IMR-90 (cell line): ENCODE measurements at regions of chr5 and their contacts with region 1.

Region 1: GRCh38 chr5:80686757-80687156 is 32.0 kb upstream of the DHFR start:
- DNase-seq: peak; percentile 36
- ATAC-seq: peak; percentile 44; the same call in 1 of the 2 replicates
- H3K4me3 ChIP-seq: no peak overlapping the region
- H3K27ac ChIP-seq: no peak overlapping the region
- H3K4me1 ChIP-seq: peaks cover 2% of the 10 kb centered on the region; the same call in 1 of the 2 replicates
- H3K27me3 ChIP-seq: no peaks in the 10 kb centered on the region
- CTCF ChIP-seq: peak; percentile 58
- POLR2A ChIP-seq: no peak
- RAD21 ChIP-seq: peak; percentile 60

Region 2: DNA sequence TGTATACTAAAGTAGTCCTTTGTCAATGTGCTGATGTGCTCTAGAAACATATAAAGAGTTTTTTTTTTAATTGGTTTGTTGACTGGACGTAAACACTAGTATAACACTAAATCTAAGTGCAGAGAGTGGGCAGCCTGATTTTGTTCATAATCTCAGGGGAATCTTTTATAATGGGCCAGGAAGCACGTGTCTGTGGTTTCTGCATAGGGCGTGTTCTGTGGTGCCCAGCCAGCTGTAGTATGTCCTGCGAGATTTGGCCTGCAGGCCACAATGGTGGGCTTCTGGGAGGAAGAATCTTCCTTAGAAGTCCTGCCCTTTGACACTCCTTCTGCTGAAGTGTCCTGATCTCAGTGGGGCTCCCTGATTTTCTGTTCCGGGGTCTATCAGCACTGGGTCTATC is 17.0 kb after region 1 on chr5:
- CTCF ChIA-PET with region 1: no interaction called
- POLR2A ChIA-PET with region 1: no interaction called
- dilution Hi-C with region 1: no loop called
- in situ Hi-C with region 1: no loop called
- intact Hi-C with region 1: no loop called
- DNase-seq: no peak
- ATAC-seq: no peak
- H3K4me3 ChIP-seq: no peak overlapping the region
- H3K27ac ChIP-seq: no peak overlapping the region
- H3K4me1 ChIP-seq: peaks cover 5% of the 10 kb centered on the region
- H3K27me3 ChIP-seq: no peaks in the 10 kb centered on the region
- CTCF ChIP-seq: no peak
- POLR2A ChIP-seq: no peak
- RAD21 ChIP-seq: no peak

Region 3: DNA sequence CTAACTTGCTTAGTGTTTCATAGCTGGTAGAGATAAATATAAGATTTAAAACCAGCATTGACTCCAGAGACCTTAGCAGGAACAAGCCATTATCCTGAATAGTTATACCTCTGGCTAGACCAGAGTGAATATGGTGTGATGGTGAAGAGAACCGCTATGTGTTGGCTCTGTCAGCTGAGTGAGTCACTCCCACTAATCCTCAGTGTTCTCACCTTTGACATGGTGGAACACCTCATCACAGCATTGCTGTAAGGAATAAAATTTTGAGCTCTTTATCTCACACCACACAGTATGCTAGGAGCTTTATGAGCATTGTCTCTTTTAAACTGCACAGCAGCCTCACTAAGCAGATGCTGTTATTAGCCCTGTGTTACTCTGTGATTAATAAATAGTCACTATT is 58.7 kb after region 1 on chr5:
- CTCF ChIA-PET with region 1: no interaction called
- POLR2A ChIA-PET with region 1: no interaction called
- dilution Hi-C with region 1: no loop called
- in situ Hi-C with region 1: no loop called
- intact Hi-C with region 1: no loop called
- DNase-seq: peak; percentile 67
- ATAC-seq: no peak; the same call in 1 of the 2 replicates
- H3K4me3 ChIP-seq: no peak overlapping the region
- H3K27ac ChIP-seq: no peak overlapping the region
- H3K4me1 ChIP-seq: no peaks in the 10 kb centered on the region
- H3K27me3 ChIP-seq: no peaks in the 10 kb centered on the region
- CTCF ChIP-seq: no peak
- POLR2A ChIP-seq: no peak
- RAD21 ChIP-seq: no peak

Region 4: DNA sequence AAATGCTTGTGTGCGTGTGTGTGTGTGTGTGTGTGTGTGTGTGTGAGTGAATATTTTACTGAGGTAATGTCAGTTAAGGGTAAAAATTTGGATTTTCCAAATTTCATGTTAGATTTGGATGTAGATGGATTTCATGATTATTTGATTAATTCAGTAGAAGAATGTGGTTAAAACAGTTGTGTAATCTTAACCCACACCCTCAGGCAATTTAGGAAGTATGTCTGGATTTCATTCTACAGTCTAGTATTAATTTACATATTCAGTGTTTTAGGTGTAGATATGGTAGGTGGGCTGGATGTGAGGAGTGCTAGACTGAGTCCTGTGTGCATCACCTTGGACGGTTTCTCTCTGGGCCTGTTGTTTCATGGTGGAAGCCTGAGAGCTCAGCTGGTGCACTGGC is 447.3 kb after region 1 on chr5:
- CTCF ChIA-PET with region 1: no interaction called
- POLR2A ChIA-PET with region 1: no interaction called
- dilution Hi-C with region 1: no loop called
- in situ Hi-C with region 1: no loop called
- intact Hi-C with region 1: no loop called
- DNase-seq: no peak
- ATAC-seq: no peak
- H3K4me3 ChIP-seq: no peak overlapping the region
- H3K27ac ChIP-seq: no peak overlapping the region
- H3K4me1 ChIP-seq: no peaks in the 10 kb centered on the region
- H3K27me3 ChIP-seq: no peaks in the 10 kb centered on the region
- CTCF ChIP-seq: no peak
- POLR2A ChIP-seq: no peak
- RAD21 ChIP-seq: no peak

Region 5: GRCh38 chr5:81194633-81195333 is 508.0 kb after region 1 on chr5:
- CTCF ChIA-PET with region 1: no interaction called
- POLR2A ChIA-PET with region 1: no interaction called
- dilution Hi-C with region 1: no loop called
- in situ Hi-C with region 1: loop called (anchors 10 kb)
- intact Hi-C with region 1: loop called (anchors 1 kb)
- DNase-seq: peak; percentile 70
- ATAC-seq: peak; percentile 100
- H3K4me3 ChIP-seq: no peak overlapping the region
- H3K27ac ChIP-seq: no peak overlapping the region
- H3K4me1 ChIP-seq: no peaks in the 10 kb centered on the region; the same call in 1 of the 2 replicates
- H3K27me3 ChIP-seq: no peaks in the 10 kb centered on the region
- CTCF ChIP-seq: peak; percentile 95
- POLR2A ChIP-seq: no peak
- RAD21 ChIP-seq: peak; percentile 94